A673 (cell line): ENCODE measurements at regions of chr12 and their contacts with region 1.

Region 1: GRCh38 chr12:50763639-50764285 is at the start of gene ATF1:
- DNase-seq: peak; percentile 96
- H3K4me3 ChIP-seq: peak within 1 kb of the TSS; percentile 83
- H3K27ac ChIP-seq: peak within 1 kb of the TSS; percentile 99
- H3K4me1 ChIP-seq: peaks cover 19% of the 10 kb centered on the region
- H3K27me3 ChIP-seq: no peaks in the 10 kb centered on the region
- CTCF ChIP-seq: no peak
- total RNA-seq, gene ATF1: 37.9 and 42.3 TPM in 2 replicates

Region 2: DNA sequence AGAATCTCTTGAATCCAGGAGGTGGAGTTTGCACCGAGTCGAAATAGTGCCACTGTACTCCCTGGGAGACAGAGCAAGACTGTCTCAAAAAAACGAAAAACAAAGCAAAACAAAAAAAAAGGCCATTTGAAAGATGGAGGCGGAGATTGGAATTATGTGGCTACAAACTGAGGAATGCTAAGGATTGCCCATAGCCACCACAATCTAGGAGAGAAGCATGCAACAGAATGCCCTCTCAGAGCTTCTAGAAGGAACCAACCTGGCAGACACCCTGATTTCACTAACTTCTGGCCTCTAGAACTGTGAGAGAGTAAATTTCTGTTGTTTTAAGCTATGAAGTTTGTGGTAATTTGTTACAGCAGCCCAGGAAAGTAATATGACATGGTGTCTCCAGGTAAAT is 430.3 kb before region 1 on chr12:
- CTCF ChIA-PET with region 1: no interaction called
- POLR2A ChIA-PET with region 1: no interaction called
- intact Hi-C with region 1: no loop called
- DNase-seq: no peak
- H3K4me3 ChIP-seq: no peak overlapping the region
- H3K27ac ChIP-seq: no peak overlapping the region
- H3K4me1 ChIP-seq: no peaks in the 10 kb centered on the region
- H3K27me3 ChIP-seq: no peaks in the 10 kb centered on the region
- CTCF ChIP-seq: no peak

Region 3: GRCh38 chr12:50677858-50678257 is 85.9 kb before region 1 on chr12:
- CTCF ChIA-PET with region 1: no interaction called
- POLR2A ChIA-PET with region 1: no interaction called
- intact Hi-C with region 1: no loop called
- DNase-seq: no peak
- H3K4me3 ChIP-seq: no peak overlapping the region
- H3K27ac ChIP-seq: no peak overlapping the region
- H3K4me1 ChIP-seq: no peaks in the 10 kb centered on the region
- H3K27me3 ChIP-seq: no peaks in the 10 kb centered on the region
- CTCF ChIP-seq: no peak

Region 4: GRCh38 chr12:50986966-50987737 is 223.4 kb after region 1 on chr12:
- CTCF ChIA-PET with region 1: interaction called, 10 read pairs
- POLR2A ChIA-PET with region 1: no interaction called
- intact Hi-C with region 1: no loop called
- DNase-seq: peak; percentile 53
- H3K4me3 ChIP-seq: no peak overlapping the region
- H3K27ac ChIP-seq: no peak overlapping the region
- H3K4me1 ChIP-seq: no peaks in the 10 kb centered on the region
- H3K27me3 ChIP-seq: no peaks in the 10 kb centered on the region
- CTCF ChIP-seq: peak; percentile 66

Region 5: GRCh38 chr12:51001799-51002198 is 238.0 kb after region 1 on chr12:
- CTCF ChIA-PET with region 1: no interaction called
- POLR2A ChIA-PET with region 1: interaction called, 27 read pairs
- intact Hi-C with region 1: no loop called
- DNase-seq: no peak
- H3K4me3 ChIP-seq: no peak overlapping the region
- H3K27ac ChIP-seq: no peak overlapping the region
- H3K4me1 ChIP-seq: no peaks in the 10 kb centered on the region
- H3K27me3 ChIP-seq: no peaks in the 10 kb centered on the region
- CTCF ChIP-seq: no peak

Region 6: DNA sequence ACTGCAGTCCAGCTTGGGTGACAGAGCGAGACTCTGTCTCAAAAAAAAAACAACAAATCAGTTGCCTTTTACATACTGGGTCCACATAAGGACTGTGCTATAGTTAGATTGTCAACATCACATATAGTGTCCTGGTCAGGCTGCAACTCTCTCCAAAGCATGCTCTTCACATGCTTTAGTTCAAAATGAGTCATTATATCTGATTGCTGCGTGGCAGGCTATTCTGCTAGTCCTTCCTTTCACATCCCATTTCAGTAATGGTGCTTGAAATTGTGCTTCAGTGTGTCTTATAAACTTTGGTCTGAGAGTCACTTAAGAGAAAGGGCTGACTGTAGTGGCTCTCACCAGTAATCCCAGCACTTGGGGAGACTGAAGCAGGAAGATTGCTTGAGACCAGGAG is 291.3 kb after region 1 on chr12:
- CTCF ChIA-PET with region 1: no interaction called
- POLR2A ChIA-PET with region 1: interaction called, 10 read pairs
- intact Hi-C with region 1: no loop called
- DNase-seq: no peak
- H3K4me3 ChIP-seq: no peak overlapping the region
- H3K27ac ChIP-seq: no peak overlapping the region
- H3K4me1 ChIP-seq: no peaks in the 10 kb centered on the region
- H3K27me3 ChIP-seq: no peaks in the 10 kb centered on the region
- CTCF ChIP-seq: no peak

Region 7: DNA sequence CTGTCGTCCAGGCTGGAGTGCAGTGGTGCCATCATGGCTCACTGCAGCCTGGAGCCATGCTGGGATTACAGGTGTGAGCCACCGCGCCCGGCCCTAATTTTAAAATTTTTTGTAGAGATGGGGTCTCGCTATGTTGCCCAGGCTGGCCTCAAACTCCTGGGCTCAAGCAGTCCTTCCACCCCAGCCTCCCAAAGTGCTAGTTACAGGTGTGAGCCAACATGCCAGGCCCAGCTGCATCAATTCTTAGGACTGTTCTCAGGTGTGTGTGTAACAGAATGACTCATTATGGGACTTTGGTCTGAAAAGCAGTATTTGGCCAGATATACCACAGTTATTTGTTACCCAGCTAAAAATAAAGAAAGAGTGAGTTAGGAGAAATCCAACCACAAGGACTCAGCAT is 301.8 kb after region 1 on chr12:
- CTCF ChIA-PET with region 1: no interaction called
- POLR2A ChIA-PET with region 1: no interaction called
- intact Hi-C with region 1: no loop called
- DNase-seq: no peak
- H3K4me3 ChIP-seq: no peak overlapping the region
- H3K27ac ChIP-seq: no peak overlapping the region
- H3K4me1 ChIP-seq: peaks cover 9% of the 10 kb centered on the region
- H3K27me3 ChIP-seq: no peaks in the 10 kb centered on the region
- CTCF ChIP-seq: no peak